ENCODE measurements at regions of chr10 and their contacts with region 1.

Region 1: GRCh38 chr10:17643755-17644484 is at the start of gene STAM:
- DNase-seq: peak; percentile 87 to 96 (median 93)
- ATAC-seq: peak; percentile 86
- H3K4me3 ChIP-seq: peak within 1 kb of the TSS; percentile 84 to 85
- H3K4me3 Mint-ChIP-seq: peak within 1 kb of the TSS; percentile 99
- H3K27ac ChIP-seq: peak within 1 kb of the TSS; percentile 88 to 97
- H3K27ac Mint-ChIP-seq: peak within 1 kb of the TSS; percentile 100
- H3K4me1 ChIP-seq: peaks cover 40% of the 10 kb centered on the region
- H3K4me1 Mint-ChIP-seq: peaks cover 57% of the 10 kb centered on the region
- H3K27me3 ChIP-seq: no peaks in the 10 kb centered on the region
- H3K27me3 Mint-ChIP-seq: no peaks in the 10 kb centered on the region
- CTCF ChIP-seq: no peak
- total RNA-seq, gene STAM: 44.0 to 47.9 TPM

Region 2: DNA sequence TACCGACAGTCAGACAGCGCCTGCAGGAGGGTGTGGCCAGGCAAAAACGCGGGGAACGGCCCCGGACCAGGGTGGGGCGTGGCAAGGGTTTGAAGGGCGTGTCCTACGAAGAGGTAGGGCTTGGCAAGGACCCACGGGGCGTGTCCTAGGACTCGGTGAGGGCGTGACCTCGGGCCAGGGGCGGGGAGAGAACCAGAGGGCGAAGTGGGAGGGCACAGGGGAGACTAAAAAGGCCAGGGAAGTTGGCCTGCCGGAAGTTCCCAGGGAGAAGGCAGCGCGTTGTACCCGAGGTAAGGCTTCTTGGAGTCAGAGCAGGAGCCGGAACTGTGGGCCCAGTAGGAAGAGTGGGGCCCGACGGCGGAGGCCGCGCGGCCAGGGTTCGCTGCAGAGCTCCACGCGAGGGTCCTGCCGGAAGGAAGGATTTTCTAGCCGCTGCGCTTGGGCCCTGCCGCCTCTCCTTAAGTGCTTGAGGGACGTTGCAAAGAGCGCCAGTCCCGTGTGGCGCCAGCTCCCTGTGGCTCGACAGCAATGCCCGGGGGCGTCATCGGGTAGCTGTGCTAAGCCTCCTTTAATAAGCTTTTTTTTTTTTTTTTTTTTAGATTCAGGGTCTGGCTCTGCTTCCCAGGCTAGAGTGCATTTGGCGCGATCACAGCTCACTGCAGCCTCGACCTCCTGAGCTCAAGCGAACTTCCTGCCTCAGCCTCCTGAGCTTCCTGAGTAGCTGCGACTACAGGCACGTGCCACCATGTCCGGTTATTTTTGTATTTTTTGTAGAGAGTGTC is 1207.0 kb before region 1 on chr10 and contains the start of gene PTER:
- CTCF ChIA-PET with region 1: no interaction called
- POLR2A ChIA-PET with region 1: no interaction called
- intact Hi-C with region 1: loop called in 1 of 2 experiments (anchors 2 kb)
- DNase-seq: peak; percentile 93 to 99 (median 96)
- ATAC-seq: peak; percentile 99
- H3K4me3 ChIP-seq: peak within 1 kb of the TSS; percentile 77 to 79
- H3K4me3 Mint-ChIP-seq: peak within 1 kb of the TSS; percentile 88
- H3K27ac ChIP-seq: peak within 1 kb of the TSS; percentile 61 to 77
- H3K27ac Mint-ChIP-seq: peak within 1 kb of the TSS; percentile 84
- H3K4me1 ChIP-seq: peaks cover 31% of the 10 kb centered on the region
- H3K4me1 Mint-ChIP-seq: peaks cover 51% of the 10 kb centered on the region
- H3K27me3 ChIP-seq: no peaks in the 10 kb centered on the region
- H3K27me3 Mint-ChIP-seq: no peaks in the 10 kb centered on the region
- CTCF ChIP-seq: no peak
- total RNA-seq, gene PTER: 6.4 TPM

Region 3: DNA sequence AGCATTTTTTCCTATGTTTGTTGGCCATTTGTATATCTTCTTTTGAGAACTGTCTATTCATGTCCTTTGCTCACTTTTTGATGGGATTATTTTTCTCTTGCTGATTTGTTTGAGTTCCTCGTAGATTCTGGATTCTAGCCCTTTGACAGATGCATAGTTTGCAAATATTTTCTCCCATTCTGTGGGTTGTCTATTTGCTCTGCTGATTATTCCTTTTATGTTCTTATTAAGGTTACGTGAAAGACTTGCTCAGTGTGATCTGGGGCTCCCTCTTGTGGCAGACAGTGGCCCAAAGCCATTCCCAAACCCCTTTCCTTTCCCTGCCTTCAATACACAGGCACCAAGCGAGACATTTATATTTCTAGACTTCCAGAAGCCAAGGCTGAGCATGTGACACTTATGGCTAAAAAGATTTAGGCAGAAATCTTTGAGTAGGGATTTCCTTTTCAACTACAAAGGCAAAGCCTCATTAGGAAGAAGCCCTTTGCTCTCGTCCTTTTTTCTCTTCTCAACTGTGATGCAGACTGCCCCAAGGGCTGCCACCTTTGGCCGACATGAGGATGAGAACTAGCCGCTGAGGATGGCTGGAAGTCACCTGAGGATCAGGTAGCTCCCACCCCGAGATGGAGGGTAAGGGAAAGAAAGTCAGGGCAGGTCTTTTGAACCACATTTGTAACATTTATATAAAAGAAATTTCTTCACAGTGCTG is 213.1 kb before region 1 on chr10:
- CTCF ChIA-PET with region 1: no interaction called
- POLR2A ChIA-PET with region 1: interaction called, 5 read pairs
- intact Hi-C with region 1: loop called in 1 of 2 experiments (anchors 5 kb)
- DNase-seq: peak in 8 of 9 experiments; percentile 42 to 80 (median 72)
- ATAC-seq: no peak
- H3K4me3 ChIP-seq: no peak overlapping the region
- H3K4me3 Mint-ChIP-seq: no peak overlapping the region
- H3K27ac ChIP-seq: no peak overlapping the region
- H3K27ac Mint-ChIP-seq: no peak overlapping the region
- H3K4me1 ChIP-seq: peaks cover 49% of the 10 kb centered on the region
- H3K4me1 Mint-ChIP-seq: peaks cover 50% of the 10 kb centered on the region
- H3K27me3 ChIP-seq: no peaks in the 10 kb centered on the region
- H3K27me3 Mint-ChIP-seq: peaks cover 2% of the 10 kb centered on the region
- CTCF ChIP-seq: peak; percentile 95

Region 4: DNA sequence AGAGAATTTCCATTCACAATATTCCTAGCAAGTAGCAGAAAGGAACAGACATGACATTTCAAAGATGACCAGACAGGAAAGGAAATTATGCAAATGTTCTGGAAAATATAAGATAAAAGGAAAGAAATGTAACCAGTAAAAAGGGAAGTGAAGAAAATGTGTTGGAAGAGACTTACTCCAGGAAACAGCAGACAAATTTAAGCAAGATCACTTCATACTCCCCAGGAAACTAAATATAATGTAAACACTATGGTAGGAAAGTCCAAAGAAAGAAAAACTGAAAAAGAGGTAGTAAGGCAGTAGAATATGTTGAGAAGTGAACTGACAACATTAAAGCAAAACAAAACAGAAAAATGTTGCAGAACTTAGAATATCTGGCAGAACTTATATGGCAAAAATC is 183.2 kb before region 1 on chr10:
- CTCF ChIA-PET with region 1: no interaction called
- POLR2A ChIA-PET with region 1: no interaction called
- intact Hi-C with region 1: no loop called
- DNase-seq: no peak
- ATAC-seq: no peak
- H3K4me3 ChIP-seq: no peak overlapping the region
- H3K4me3 Mint-ChIP-seq: no peak overlapping the region
- H3K27ac ChIP-seq: no peak overlapping the region
- H3K27ac Mint-ChIP-seq: no peak overlapping the region
- H3K4me1 ChIP-seq: no peaks in the 10 kb centered on the region
- H3K4me1 Mint-ChIP-seq: no peaks in the 10 kb centered on the region
- H3K27me3 ChIP-seq: no peaks in the 10 kb centered on the region
- H3K27me3 Mint-ChIP-seq: peaks cover 51% of the 10 kb centered on the region
- CTCF ChIP-seq: no peak

Region 5: GRCh38 chr10:17662193-17663138 is 18.5 kb after region 1 on chr10:
- CTCF ChIA-PET with region 1: interaction called, 4 read pairs
- POLR2A ChIA-PET with region 1: interaction called, 10 read pairs
- intact Hi-C with region 1: loop called in 1 of 2 experiments (anchors 1 kb)
- DNase-seq: peak in 1 of 9 experiments; percentile 33
- ATAC-seq: peak; percentile 40
- H3K4me3 ChIP-seq: no peak overlapping the region
- H3K4me3 Mint-ChIP-seq: peak overlapping the region; percentile 51
- H3K27ac ChIP-seq: no peak overlapping the region
- H3K27ac Mint-ChIP-seq: peak overlapping the region; percentile 15
- H3K4me1 ChIP-seq: peaks cover 15% of the 10 kb centered on the region
- H3K4me1 Mint-ChIP-seq: peaks cover 60% of the 10 kb centered on the region
- H3K27me3 ChIP-seq: no peaks in the 10 kb centered on the region
- H3K27me3 Mint-ChIP-seq: no peaks in the 10 kb centered on the region
- CTCF ChIP-seq: no peak

Region 6: DNA sequence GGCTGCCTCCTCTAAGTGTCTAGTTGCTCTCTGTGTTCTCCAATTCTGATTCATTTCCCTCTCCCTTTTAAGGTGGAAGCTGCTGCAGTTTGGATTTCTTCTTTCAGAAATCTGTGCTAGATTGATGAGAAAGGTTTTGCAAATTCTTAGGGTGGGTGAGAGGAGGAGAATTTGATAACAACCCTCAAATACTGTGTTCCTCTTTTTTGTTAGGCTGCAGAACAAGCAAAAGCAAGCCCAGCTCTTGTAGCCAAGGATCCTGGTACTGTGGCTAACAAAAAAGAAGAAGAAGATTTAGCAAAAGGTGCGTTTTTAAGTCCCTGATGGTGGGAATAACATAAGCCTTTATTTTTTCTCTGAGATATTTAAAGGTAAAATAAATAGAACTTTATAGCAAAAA is 49.1 kb after region 1 on chr10:
- CTCF ChIA-PET with region 1: interaction called, 3 read pairs
- POLR2A ChIA-PET with region 1: no interaction called
- intact Hi-C with region 1: loop called in 1 of 2 experiments (anchors 5 kb)
- DNase-seq: no peak
- ATAC-seq: no peak
- H3K4me3 ChIP-seq: no peak overlapping the region
- H3K4me3 Mint-ChIP-seq: no peak overlapping the region
- H3K27ac ChIP-seq: no peak overlapping the region
- H3K27ac Mint-ChIP-seq: peak overlapping the region; percentile 73
- H3K4me1 ChIP-seq: no peaks in the 10 kb centered on the region
- H3K4me1 Mint-ChIP-seq: no peaks in the 10 kb centered on the region
- H3K27me3 ChIP-seq: no peaks in the 10 kb centered on the region
- H3K27me3 Mint-ChIP-seq: no peaks in the 10 kb centered on the region
- CTCF ChIP-seq: no peak

Measured in CD8-positive, alpha-beta T cell (primary cell).